Heart left ventricle (tissue), 16 donors: ENCODE measurements at regions of chr16 and their contacts with region 1.

Region 1: GRCh38 chr16:53235851-53236250 is 181.1 kb downstream of the CHD9 start:
- DNase-seq: no peak
- ATAC-seq: no peak
- H3K4me3 ChIP-seq: no peak overlapping the region
- H3K27ac ChIP-seq: no peak overlapping the region
- H3K4me1 ChIP-seq: no peaks in the 10 kb centered on the region
- H3K27me3 ChIP-seq: no peaks in the 10 kb centered on the region
- CTCF ChIP-seq: no peak
- POLR2A ChIP-seq: no peak

Region 2: GRCh38 chr16:53266156-53266555 is 30.3 kb after region 1 on chr16:
- intact Hi-C with region 1: loop called in 2 of 10 experiments (anchors 5 kb)
- DNase-seq: no peak
- ATAC-seq: no peak
- H3K4me3 ChIP-seq: no peak overlapping the region
- H3K27ac ChIP-seq: no peak overlapping the region
- H3K4me1 ChIP-seq: no peaks in the 10 kb centered on the region
- H3K27me3 ChIP-seq: no peaks in the 10 kb centered on the region
- CTCF ChIP-seq: no peak
- POLR2A ChIP-seq: no peak

Region 3: DNA sequence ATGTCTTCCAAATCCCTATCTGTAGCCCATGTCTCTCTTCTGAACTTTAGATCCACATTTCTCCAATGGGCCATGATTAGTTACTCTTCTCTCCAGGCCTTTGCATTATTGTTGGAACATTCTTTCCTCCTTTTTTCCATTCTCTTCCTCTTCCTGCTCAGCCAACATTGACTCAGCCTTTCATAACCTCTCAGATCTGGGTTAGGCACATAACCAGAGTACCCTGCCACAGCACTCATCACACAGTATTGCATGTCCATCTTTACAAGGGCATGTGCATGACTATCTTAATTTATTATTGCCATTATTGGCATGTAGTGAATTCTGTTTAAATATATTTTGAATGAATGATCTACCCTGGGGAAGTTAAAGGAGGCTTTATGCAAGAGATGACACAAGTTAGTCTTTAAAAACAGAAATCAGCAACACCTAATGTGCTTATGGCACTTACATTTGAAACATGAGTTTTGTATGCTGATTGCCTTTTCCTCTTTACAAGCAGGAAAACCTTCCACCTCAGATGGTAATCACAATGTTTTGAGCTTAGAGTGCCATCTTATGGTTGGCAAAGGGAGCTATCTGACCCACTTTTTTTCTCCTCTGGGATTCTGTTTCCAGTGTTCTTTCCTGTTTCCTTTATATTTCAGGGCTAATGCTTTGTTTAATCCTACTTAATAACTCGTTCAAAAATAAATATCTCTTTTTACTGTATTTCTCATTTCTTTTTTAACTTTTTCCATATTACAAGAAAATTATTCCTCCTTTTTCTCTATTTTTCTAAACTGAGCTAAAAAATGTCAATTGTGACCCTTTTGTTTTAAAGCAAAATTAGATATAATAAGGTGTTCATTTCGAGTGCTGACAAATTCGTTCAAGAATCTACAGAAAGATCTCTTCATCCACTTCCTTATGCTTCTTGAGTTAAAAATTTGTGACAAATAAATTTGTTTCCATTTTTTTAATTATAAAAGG is 47.4 kb after region 1 on chr16:
- intact Hi-C with region 1: loop called in 2 of 10 experiments (anchors 5 kb)
- DNase-seq: no peak
- ATAC-seq: peak in 2 of 4 donors; percentile 41 to 52
- H3K4me3 ChIP-seq: no peak overlapping the region
- H3K27ac ChIP-seq: no peak overlapping the region
- H3K4me1 ChIP-seq: peaks cover 0 to 10% (median 0%) of the 10 kb centered on the region in 12 donors
- H3K27me3 ChIP-seq: no peaks in the 10 kb centered on the region
- CTCF ChIP-seq: peak in 11 of 12 donors; percentile 15 to 64 (median 38)
- POLR2A ChIP-seq: no peak

Region 4: GRCh38 chr16:53291757-53292392 is 56.0 kb after region 1 on chr16:
- intact Hi-C with region 1: loop called in 4 of 10 experiments (anchors 5 to 10 kb)
- DNase-seq: no peak
- ATAC-seq: no peak
- H3K4me3 ChIP-seq: no peak overlapping the region
- H3K27ac ChIP-seq: no peak overlapping the region
- H3K4me1 ChIP-seq: no peaks in the 10 kb centered on the region
- H3K27me3 ChIP-seq: no peaks in the 10 kb centered on the region
- CTCF ChIP-seq: no peak
- POLR2A ChIP-seq: no peak

Region 5: DNA sequence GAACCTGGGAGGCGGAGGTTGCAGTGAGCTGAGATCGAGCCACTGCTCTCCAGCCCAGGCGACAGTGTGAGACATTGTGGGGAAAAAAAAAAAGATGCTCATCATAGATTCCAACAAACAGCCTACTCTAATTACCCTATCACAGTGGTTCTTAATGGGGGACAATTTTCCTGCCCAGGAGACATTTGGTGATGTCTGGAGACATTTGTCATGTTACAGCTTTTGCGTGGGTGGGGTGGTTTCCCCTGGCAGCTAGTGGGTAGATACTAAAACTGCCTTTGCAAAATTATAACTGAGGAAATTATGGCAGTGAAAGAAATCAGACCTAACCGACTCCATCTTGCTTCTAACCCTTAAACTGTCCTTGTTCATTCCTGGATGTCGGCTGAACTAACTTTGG is 105.9 kb after region 1 on chr16:
- intact Hi-C with region 1: no loop called
- DNase-seq: no peak
- ATAC-seq: no peak
- H3K4me3 ChIP-seq: no peak overlapping the region
- H3K27ac ChIP-seq: no peak overlapping the region
- H3K4me1 ChIP-seq: no peaks in the 10 kb centered on the region
- H3K27me3 ChIP-seq: no peaks in the 10 kb centered on the region
- CTCF ChIP-seq: no peak
- POLR2A ChIP-seq: no peak